ENCODE measurements at regions of chr3 and their contacts with region 1.

Region 1: DNA sequence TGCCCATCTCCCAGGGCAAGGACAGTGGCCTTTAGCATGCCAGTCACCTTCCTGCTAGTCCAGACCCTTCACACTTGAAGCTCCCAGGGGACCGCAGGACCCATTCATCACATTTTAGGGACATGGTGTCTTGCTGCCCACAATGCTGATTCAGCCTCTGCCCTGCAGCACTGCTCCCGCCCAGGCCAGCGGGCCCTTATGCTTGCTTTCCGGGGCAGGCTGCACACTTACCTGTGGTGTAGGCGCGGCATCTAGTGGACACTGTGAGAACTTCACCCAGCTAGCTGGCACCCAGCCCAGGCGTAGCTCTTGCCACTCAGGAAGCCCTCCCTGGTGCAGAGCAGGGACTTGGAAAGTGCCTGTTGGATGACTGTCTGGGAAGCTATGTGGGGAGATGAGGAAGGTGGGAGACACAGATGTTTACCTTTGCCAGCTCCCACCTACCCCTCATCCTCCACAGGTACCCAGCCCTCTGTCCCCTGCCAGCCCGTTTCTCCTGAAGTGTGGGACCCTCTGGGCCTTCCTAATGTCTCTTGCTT is 26.2 kb upstream of the NR2C2 start:
- DNase-seq: peak; percentile 89
- ATAC-seq: peak; percentile 95
- H3K4me3 Mint-ChIP-seq: no peak overlapping the region
- H3K27ac Mint-ChIP-seq: no peak overlapping the region
- H3K4me1 Mint-ChIP-seq: no peaks in the 10 kb centered on the region
- H3K27me3 Mint-ChIP-seq: no peaks in the 10 kb centered on the region

Region 2: DNA sequence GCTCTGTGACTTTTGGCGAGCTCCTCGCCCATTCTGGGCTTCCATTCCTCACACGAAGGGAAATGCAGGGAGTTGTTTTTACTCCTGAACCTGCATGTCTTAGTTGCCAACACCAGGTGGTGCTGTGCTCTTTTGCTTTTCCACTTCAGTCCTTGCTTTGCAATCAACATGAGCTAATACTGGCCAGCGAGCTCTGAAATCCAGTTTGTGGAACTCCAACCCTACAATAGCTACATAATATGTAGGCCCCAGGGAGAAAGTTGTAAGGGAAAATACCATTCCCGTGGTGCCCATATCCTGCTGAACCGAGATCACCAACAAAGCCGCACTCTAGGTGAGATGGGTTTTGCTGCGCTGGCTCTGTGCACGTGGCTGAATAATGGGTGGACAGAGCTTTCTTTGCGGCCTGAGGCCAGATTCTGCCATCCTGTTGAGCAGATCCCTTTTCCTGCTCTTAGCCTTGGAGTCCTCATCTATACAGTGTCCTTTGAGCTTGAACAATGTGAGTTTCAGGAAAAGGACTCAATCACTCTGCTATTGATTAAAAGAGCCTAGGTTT is 717.5 kb before region 1 on chr3:
- CTCF ChIA-PET with region 1: no interaction called
- POLR2A ChIA-PET with region 1: no interaction called
- intact Hi-C with region 1: loop called in 1 of 2 experiments (anchors 5 kb)
- DNase-seq: peak; percentile 56
- ATAC-seq: peak; percentile 60
- H3K4me3 Mint-ChIP-seq: no peak overlapping the region
- H3K27ac Mint-ChIP-seq: no peak overlapping the region
- H3K4me1 Mint-ChIP-seq: peaks cover 2% of the 10 kb centered on the region
- H3K27me3 Mint-ChIP-seq: no peaks in the 10 kb centered on the region

Region 3: DNA sequence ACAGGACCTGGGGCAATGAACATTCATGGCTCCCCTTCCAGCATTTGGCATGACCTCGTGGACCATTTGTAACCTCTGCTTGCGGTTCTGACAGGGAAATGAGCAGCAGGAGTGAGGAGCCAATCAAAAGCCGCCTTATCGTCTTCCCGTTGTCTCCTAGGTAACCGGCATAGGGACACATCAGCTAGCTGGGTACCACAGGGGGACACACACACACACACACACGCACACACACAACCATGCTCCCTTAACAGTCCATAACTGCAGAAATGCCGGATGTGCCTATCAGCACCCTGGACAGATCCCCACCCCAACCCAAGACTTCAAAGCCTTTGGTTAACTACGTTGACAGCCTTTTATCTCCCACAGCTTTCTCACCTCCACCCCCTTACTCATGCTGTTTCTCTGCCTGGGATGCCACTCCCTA is 323.0 kb before region 1 on chr3:
- CTCF ChIA-PET with region 1: no interaction called
- POLR2A ChIA-PET with region 1: no interaction called
- intact Hi-C with region 1: no loop called
- DNase-seq: peak; percentile 78
- ATAC-seq: peak; percentile 71
- H3K4me3 Mint-ChIP-seq: no peak overlapping the region
- H3K27ac Mint-ChIP-seq: no peak overlapping the region
- H3K4me1 Mint-ChIP-seq: no peaks in the 10 kb centered on the region
- H3K27me3 Mint-ChIP-seq: peaks cover 43% of the 10 kb centered on the region

Region 4: GRCh38 chr3:14672588-14672987 is 248.6 kb before region 1 on chr3:
- CTCF ChIA-PET with region 1: interaction called, 12 read pairs
- POLR2A ChIA-PET with region 1: no interaction called
- intact Hi-C with region 1: loop called (anchors 1 kb)
- DNase-seq: no peak
- ATAC-seq: no peak
- H3K4me3 Mint-ChIP-seq: no peak overlapping the region
- H3K27ac Mint-ChIP-seq: no peak overlapping the region
- H3K4me1 Mint-ChIP-seq: no peaks in the 10 kb centered on the region
- H3K27me3 Mint-ChIP-seq: no peaks in the 10 kb centered on the region

Region 5: GRCh38 chr3:14791343-14791945 is 129.7 kb before region 1 on chr3:
- CTCF ChIA-PET with region 1: interaction called, 14 read pairs
- POLR2A ChIA-PET with region 1: no interaction called
- intact Hi-C with region 1: loop called (anchors 1 kb)
- DNase-seq: peak; percentile 78
- ATAC-seq: peak; percentile 78
- H3K4me3 Mint-ChIP-seq: no peak overlapping the region
- H3K27ac Mint-ChIP-seq: no peak overlapping the region
- H3K4me1 Mint-ChIP-seq: no peaks in the 10 kb centered on the region
- H3K27me3 Mint-ChIP-seq: peaks cover 8% of the 10 kb centered on the region

Region 6: GRCh38 chr3:15023249-15023648 is 102.1 kb after region 1 on chr3:
- CTCF ChIA-PET with region 1: interaction called, 3 read pairs
- POLR2A ChIA-PET with region 1: interaction called, 4 read pairs
- intact Hi-C with region 1: loop called in 1 of 2 experiments (anchors 5 kb)
- DNase-seq: no peak
- ATAC-seq: no peak
- H3K4me3 Mint-ChIP-seq: no peak overlapping the region
- H3K27ac Mint-ChIP-seq: no peak overlapping the region
- H3K4me1 Mint-ChIP-seq: no peaks in the 10 kb centered on the region
- H3K27me3 Mint-ChIP-seq: no peaks in the 10 kb centered on the region

Region 7: DNA sequence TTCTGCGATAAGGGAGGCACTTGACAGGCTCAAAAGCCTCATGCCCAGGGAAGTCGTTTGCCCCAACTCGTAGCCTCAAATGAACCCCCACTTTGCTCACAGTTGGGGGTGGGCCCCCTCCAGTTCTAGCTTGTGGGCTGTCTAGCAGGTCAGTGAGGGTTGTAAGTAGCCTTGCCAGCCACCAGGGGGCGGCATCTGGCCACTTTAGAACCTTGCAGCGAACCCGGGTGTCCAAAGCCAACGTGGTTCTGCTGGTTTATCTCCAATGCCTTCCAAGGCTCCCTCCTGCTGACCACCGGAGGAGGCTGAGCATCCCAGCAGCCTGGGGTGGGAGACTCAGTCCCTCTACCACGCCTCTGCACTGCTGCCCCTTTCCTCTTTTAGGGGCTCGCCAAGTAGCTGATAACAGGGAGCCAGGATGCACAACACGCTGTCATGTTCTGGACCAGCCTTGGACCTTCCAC is 187.0 kb after region 1 on chr3:
- CTCF ChIA-PET with region 1: interaction called, 10 read pairs
- POLR2A ChIA-PET with region 1: no interaction called
- intact Hi-C with region 1: no loop called
- DNase-seq: peak; percentile 86
- ATAC-seq: peak; percentile 96
- H3K4me3 Mint-ChIP-seq: no peak overlapping the region
- H3K27ac Mint-ChIP-seq: no peak overlapping the region
- H3K4me1 Mint-ChIP-seq: no peaks in the 10 kb centered on the region
- H3K27me3 Mint-ChIP-seq: peaks cover 3% of the 10 kb centered on the region